ENCODE measurements at regions of chr2 and their contacts with region 1.

Region 1: DNA sequence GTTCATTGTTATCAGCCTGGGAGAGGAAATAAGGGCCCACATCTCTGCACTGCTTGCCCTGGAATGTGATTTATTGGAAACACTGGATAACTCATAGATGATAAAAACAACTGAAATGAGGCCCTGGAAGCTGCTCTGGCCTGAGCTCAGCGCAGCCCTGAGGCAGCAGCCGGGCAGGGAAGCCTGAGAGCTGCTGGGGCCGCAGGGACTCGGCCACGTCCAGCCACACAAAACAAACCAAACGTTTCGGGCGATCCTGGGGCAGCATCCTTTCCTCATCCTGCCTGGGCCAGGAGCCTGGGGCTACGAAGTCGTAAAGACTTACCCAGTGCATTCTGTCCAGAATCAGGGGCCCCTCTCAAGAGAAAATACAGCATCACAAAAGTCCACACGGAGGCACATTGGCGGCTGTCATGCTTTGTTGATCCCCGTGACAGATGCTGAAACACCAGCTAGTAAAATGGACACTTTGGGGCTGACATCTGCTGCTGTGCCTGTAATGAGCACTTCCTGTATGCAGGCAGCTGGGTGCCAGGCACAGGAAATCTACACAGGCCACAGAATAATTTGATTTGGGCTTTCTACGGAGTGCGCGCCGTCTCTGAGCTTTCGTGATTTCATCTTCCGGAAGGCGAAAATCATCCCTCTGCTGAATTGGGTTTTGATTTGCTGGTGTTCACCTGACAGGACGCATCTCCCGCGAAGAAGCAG is 250.6 kb downstream of the EIPR1 start:
- DNase-seq: peak; percentile 85
- H3K4me3 ChIP-seq: peak overlapping the region; percentile 59
- H3K27ac ChIP-seq: peak overlapping the region; percentile 85
- H3K4me1 ChIP-seq: peaks cover 71% of the 10 kb centered on the region
- CTCF ChIP-seq: no peak

Region 2: GRCh38 chr2:2613279-2614199 is 513.5 kb before region 1 on chr2:
- CTCF ChIA-PET with region 1: no interaction called
- POLR2A ChIA-PET with region 1: no interaction called
- intact Hi-C with region 1: no loop called
- DNase-seq: peak; percentile 82
- H3K4me3 ChIP-seq: peak overlapping the region; percentile 55
- H3K27ac ChIP-seq: no peak overlapping the region
- H3K4me1 ChIP-seq: no peaks in the 10 kb centered on the region
- CTCF ChIP-seq: no peak

Region 3: DNA sequence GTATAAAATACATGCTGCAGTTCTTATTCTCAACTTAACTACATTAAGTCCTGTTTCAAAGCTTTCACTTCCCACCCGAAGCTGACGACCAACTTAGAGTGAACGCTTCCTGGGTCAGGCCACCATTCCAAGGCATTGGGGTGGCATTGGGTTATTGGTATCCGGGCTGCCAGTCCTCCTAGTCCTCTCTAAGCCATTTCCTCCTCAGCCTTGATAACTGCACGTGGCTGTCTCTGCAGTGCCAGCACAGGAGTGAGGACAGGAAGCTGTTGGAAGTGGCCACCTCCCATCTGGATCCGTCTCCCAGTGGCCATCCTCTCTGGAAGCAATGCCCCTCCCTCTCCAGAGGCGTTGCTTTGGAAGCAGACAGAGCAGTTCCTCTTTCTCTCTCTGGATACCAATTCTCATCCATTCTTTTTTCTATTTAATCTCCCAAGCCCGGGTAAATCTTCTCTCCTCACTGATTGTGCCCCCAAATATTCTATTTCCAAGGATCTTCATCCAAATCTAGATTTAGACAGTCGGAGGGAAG is 104.2 kb before region 1 on chr2:
- CTCF ChIA-PET with region 1: no interaction called
- POLR2A ChIA-PET with region 1: no interaction called
- intact Hi-C with region 1: no loop called
- DNase-seq: no peak
- H3K4me3 ChIP-seq: no peak overlapping the region
- H3K27ac ChIP-seq: no peak overlapping the region
- H3K4me1 ChIP-seq: peaks cover 15% of the 10 kb centered on the region
- CTCF ChIP-seq: no peak

Region 4: GRCh38 chr2:3142961-3143571 is 16.0 kb after region 1 on chr2:
- CTCF ChIA-PET with region 1: interaction called, 3 read pairs
- POLR2A ChIA-PET with region 1: interaction called, 18 read pairs
- intact Hi-C with region 1: no loop called
- DNase-seq: no peak
- H3K4me3 ChIP-seq: no peak overlapping the region
- H3K27ac ChIP-seq: no peak overlapping the region
- H3K4me1 ChIP-seq: peaks cover 48% of the 10 kb centered on the region
- CTCF ChIP-seq: no peak

Measured in OCI-LY7 (cell line).